Left colon (tissue), 2 donors: ENCODE measurements at regions of chr1 and their contacts with region 1.

Region 1: DNA sequence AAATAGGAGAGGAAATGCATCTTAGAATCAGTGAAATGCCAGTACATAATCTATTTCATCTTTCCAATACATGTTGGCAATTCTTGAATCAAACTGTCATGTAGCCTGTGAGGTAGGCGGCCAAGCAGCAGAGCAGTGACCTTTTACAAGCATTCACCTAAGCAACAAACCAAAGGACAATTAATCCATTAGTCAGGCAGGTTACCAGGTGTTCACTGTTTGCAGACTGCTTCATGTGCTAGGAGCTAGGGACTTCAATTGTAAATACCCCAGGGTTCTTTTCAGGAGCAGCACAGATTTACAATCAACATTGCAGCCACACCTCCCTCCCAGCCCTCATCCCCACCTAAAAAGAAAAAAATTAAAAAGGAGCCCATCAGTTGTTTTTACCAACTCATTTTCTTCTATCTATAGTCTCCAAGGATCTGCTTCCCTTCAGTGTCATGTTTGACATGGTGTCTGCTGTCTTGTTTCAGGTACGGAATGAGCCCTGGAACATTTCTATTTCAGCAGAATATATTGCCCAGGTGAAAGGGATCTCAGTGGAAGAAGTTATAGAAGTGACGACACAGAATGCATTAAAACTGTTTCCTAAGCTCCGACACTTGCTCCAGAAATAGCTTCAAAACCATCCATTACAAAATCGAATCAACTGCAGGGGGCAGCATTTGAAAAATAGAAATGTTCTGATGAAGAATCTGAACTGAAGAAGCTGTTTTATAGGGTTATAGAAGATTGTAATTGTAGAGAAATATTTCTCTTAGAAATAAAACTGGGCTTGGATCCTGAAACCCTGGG is 23.0 kb downstream of the TATDN3 start:
- DNase-seq: peak in 1 of 2 donors; percentile 28
- ATAC-seq: peak; percentile 70

Region 2: GRCh38 chr1:212981571-212982328 is 167.0 kb after region 1 on chr1:
- intact Hi-C with region 1: loop called in 1 of 2 experiments (anchors 10 kb)
- DNase-seq: no peak
- ATAC-seq: peak; percentile 39